K562 (cell line): ENCODE measurements at regions of chr12 and their contacts with region 1.

Region 1: GRCh38 chr12:108803428-108804105 is 53.8 kb downstream of the SSH1 start:
- DNase-seq: peak; percentile 82 to 87 (median 83)
- ATAC-seq: peak; percentile 96
- H3K4me3 ChIP-seq: no peak overlapping the region
- H3K27ac ChIP-seq: no peak overlapping the region
- H3K4me1 ChIP-seq: peaks cover 2 to 3% of the 10 kb centered on the region in 2 experiments; a peak in 3 of 5 replicates
- H3K27me3 ChIP-seq: no peaks in the 10 kb centered on the region
- CTCF ChIP-seq: peak; percentile 86 to 96 (median 86)
- EP300 ChIP-seq: no peak
- POLR2A ChIP-seq: no peak
- RAD21 ChIP-seq: peak; percentile 97 to 98

Region 2: GRCh38 chr12:108611884-108612415 is 191.6 kb before region 1 on chr12:
- CTCF ChIA-PET with region 1: no interaction called
- POLR2A ChIA-PET with region 1: interaction called, 3 read pairs
- in situ Hi-C with region 1: no loop called
- intact Hi-C with region 1: loop called (anchors 1 kb)
- DNase-seq: peak; percentile 64 to 77 (median 74)
- ATAC-seq: peak; percentile 80
- H3K4me3 ChIP-seq: no peak overlapping the region
- H3K27ac ChIP-seq: no peak overlapping the region
- H3K4me1 ChIP-seq: peaks cover 9 to 16% of the 10 kb centered on the region in 2 experiments
- H3K27me3 ChIP-seq: no peaks in the 10 kb centered on the region
- CTCF ChIP-seq: peak; percentile 53 to 80 (median 61); a peak in 5 of 6 replicates
- EP300 ChIP-seq: no peak
- POLR2A ChIP-seq: no peak
- RAD21 ChIP-seq: peak in 1 of 2 experiments; percentile 68; a peak in 2 of 4 replicates

Region 3: DNA sequence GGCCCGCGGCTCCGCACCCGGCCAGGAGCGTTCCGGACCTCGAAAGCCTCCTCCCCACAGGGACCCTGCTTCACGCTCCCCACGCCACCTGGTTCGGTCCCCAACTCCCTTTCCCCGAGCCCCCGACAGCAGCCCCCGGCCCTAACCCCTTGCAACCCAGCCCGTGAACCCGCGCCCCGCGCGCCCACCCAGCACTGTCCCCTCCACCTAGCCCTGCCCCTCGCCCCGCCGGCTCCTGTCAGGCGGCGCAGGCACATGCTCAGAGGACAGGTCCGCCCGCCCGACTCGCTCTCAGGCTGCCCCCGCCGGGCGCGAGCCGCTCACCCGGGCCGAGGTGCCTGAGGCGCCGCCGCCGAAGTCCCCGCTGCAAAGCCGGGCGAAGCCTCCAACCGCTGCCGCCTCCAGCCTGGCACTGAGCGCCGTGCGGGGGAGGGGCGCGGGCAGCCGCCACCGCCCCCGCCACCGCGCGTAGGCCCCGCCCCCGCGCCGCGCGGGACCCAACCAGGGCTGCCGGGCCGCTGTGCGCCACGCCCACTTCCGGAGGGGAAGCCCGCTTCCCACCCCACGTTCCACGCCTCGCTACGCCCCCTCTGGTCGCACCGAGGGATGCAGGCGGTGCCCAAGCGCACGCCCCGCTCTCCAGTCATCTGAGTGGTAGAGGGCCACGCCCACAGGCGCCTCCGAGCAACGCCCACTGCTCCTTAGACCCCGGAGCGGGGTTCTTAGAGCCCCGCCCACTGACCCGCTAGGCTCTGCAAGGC is 72.3 kb before region 1 on chr12 and contains the start of gene CORO1C:
- CTCF ChIA-PET with region 1: interaction called, 6 read pairs
- POLR2A ChIA-PET with region 1: interaction called, 4 read pairs
- in situ Hi-C with region 1: no loop called
- intact Hi-C with region 1: loop called (anchors 5 kb)
- DNase-seq: peak; percentile 95 to 97 (median 96)
- ATAC-seq: peak; percentile 77
- H3K4me3 ChIP-seq: peak within 1 kb of the TSS; percentile 89
- H3K27ac ChIP-seq: peak within 1 kb of the TSS; percentile 93
- H3K4me1 ChIP-seq: peaks cover 21 to 32% of the 10 kb centered on the region in 2 experiments
- H3K27me3 ChIP-seq: no peaks in the 10 kb centered on the region
- CTCF ChIP-seq: peak; percentile 77 to 85 (median 80)
- EP300 ChIP-seq: no peak; the same call in 1 of the 2 replicates
- POLR2A ChIP-seq: peak; percentile 78
- RAD21 ChIP-seq: peak in 1 of 2 experiments; percentile 53; a peak in 3 of 4 replicates
- polyA plus RNA-seq, gene CORO1C: 55.2 to 68.6 TPM

Region 4: DNA sequence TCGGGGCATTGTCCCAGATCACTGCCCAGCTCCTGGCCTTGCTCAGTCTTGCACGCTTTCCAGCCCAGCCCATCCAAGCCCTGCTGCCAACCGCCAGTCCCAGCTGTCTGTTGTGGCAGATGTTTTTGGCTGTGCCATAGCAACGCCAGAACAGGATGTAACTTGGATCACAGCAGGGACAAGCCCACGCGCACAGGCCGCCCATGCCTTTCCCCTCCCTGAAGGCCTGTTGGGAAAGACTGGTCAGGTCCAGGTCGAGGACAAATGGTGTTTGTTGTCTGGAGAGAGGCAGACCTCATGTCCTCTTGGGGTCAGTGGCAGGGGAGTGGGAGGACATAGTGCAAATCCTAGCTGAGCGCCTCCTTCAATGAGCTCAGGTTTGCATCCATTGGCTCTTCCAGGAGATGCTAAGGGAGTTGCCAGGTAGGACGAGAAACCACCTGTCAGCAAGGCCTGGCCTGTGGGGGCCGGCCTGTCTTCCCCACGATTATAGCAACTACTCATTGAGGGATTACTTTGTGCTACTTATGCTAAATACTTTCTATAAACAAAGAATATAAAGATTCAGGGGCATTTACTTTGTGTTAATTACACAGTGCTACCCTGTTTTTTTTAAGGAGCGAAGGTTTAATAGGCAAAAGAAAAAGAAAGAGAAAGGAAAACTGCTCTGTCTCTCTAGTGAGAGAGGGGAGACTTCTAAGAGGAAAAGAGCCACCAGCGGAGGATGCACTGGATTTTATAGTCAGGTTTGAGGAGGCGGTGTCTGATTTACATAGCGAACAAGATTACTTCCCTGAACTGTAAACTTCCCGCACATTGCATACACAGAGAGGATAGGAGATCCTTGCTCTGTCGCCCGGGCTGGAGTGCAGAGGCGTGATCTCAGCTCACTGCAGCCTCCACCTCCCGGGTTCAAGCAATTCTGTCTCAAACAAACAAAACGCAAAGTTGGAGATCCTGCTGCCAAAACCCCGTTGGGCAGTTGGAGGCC is 29.5 kb before region 1 on chr12:
- CTCF ChIA-PET with region 1: no interaction called
- POLR2A ChIA-PET with region 1: no interaction called
- in situ Hi-C with region 1: no loop called
- intact Hi-C with region 1: no loop called
- DNase-seq: no peak
- ATAC-seq: no peak
- H3K4me3 ChIP-seq: no peak overlapping the region
- H3K27ac ChIP-seq: no peak overlapping the region
- H3K4me1 ChIP-seq: peaks cover 0 to 12% of the 10 kb centered on the region in 2 experiments; a peak in 2 of 5 replicates
- H3K27me3 ChIP-seq: peaks cover 0 to 4% of the 10 kb centered on the region in 2 experiments; a peak in 4 of 5 replicates
- CTCF ChIP-seq: no peak
- EP300 ChIP-seq: no peak
- POLR2A ChIP-seq: no peak
- RAD21 ChIP-seq: no peak